AG04450 (cell line): ENCODE measurements at regions of chr18 and their contacts with region 1.

Region 1: GRCh38 chr18:34122724-34123334 is 101.9 kb downstream of the NOL4 start:
- DNase-seq: peak; percentile 21
- H3K4me3 ChIP-seq: no peak overlapping the region
- H3K27ac ChIP-seq: no peak overlapping the region
- H3K27me3 ChIP-seq: no peaks in the 10 kb centered on the region
- CTCF ChIP-seq: peak; percentile 97

Region 2: DNA sequence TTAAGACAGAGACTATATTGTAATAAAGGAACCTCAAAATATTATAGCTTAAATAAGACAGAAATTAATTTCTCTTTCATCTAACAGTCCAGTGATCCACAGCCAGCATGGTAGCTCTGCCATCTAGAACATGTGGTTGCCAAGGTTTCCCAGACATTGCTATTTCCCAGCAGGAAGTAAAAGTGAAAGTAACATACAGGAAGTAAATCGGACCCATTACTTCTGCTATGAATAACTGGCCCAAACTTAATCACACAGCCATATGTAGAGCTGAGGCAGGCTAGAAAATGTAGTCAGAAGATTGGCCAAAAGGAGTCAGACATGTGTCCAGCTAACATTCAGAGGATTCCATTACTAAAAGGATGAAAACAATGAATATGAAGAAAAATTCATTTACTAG is 30.9 kb after region 1 on chr18:
- CTCF ChIA-PET with region 1: interaction called, 13 read pairs
- POLR2A ChIA-PET with region 1: no interaction called
- DNase-seq: no peak
- H3K4me3 ChIP-seq: peak overlapping the region; percentile 0; the same call in 1 of the 2 replicates
- H3K27ac ChIP-seq: no peak overlapping the region
- H3K27me3 ChIP-seq: no peaks in the 10 kb centered on the region
- CTCF ChIP-seq: no peak

Region 3: DNA sequence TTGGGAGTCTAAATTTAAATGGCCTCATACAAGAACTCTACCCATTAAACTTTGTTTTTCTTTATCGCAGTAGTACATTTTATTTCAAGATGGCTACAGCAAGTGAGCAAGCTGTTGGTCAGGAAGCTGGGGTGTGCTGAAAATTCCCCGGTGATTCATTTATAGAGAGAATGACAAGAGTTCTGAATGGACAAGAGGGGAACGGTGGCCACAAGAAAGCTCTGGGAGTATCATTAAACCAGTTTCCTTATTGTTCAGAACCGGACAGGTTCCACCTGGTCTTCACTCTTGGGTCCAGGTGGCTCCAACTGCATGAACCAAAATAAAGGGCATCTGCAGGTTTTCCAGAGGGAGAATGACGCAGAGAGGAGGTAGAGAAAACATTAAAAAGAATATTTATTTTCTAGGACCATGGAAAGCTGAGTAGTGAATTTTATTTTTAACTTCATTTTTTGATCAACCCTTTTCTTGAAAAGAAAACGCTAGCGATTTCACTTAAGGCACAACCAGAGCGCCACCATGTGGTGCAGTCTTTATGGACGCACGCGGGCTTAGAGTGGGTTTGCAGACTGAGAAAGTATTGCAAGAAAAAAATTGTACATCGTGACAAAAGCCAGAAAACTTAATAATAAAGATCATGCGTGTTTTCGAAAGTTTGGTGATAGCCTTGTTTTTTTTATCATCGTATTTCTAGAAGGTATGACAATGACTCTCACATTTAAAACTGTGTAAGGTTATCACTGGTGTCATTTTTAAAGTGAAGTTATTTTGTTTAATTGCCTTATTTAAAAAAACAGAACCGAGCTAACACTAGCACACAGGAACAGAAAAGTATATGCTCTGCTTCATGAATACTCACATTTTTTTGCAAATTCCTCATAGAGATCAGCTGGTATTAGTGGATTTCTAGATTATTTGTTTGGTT is 199.8 kb after region 1 on chr18:
- CTCF ChIA-PET with region 1: interaction called, 82 read pairs
- POLR2A ChIA-PET with region 1: no interaction called
- DNase-seq: peak; percentile 8
- H3K4me3 ChIP-seq: no peak overlapping the region
- H3K27ac ChIP-seq: no peak overlapping the region
- H3K27me3 ChIP-seq: no peaks in the 10 kb centered on the region
- CTCF ChIP-seq: peak; percentile 71

Region 4: GRCh38 chr18:34787931-34788532 is 665.2 kb after region 1 on chr18:
- CTCF ChIA-PET with region 1: interaction called, 26 read pairs
- POLR2A ChIA-PET with region 1: no interaction called
- DNase-seq: no peak
- H3K4me3 ChIP-seq: no peak overlapping the region
- H3K27ac ChIP-seq: no peak overlapping the region
- H3K27me3 ChIP-seq: no peaks in the 10 kb centered on the region
- CTCF ChIP-seq: peak; percentile 69